ENCODE measurements at regions of chr4 and their contacts with region 1.

Region 1: DNA sequence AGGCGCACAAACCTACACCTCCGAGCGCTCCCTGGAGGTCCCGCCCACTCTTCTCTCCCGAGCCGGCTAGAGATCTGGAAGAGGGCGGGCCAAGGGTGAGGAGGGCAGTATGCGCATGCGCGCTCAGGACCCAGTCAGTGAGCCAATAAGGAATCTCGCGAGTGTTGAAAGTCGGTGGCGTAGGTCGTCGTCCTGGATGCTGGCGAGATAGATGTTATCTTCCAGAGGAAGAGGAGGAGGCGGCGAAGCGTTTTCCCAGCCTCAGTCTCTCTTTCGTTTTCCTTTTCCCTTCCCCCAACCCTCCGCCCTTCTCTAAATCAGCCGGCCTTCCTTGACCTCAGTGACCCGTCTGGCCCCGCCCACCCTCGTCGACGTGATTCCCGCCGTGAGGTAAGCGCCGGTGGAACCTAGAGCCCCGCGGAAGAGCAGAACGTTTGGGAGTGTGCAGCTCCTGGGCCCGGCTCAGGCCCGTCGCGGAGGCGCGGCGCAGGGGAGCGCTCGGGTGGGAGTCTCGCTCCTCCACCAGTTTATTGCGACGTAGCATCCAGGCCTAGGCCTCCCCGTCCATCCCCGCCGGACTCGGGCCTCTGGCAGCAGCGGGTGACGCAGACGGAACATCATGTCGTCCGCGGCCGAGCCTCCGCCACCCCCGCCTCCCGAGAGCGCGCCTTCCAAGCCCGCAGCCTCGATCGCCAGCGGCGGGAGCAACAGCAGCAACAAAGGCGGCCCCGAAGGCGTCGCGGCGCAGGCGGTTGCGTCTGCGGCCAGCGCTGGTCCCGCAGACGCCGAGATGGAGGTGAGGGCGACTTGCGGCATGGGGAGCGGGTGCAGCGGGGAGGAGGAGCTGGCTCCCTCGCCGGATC is at the start of gene SMARCA5:
- DNase-seq: peak; percentile 96
- H3K4me3 Mint-ChIP-seq: peak within 1 kb of the TSS; percentile 94
- H3K27ac Mint-ChIP-seq: peak within 1 kb of the TSS; percentile 89
- H3K4me1 Mint-ChIP-seq: peaks cover 30% of the 10 kb centered on the region
- H3K27me3 Mint-ChIP-seq: peaks cover 11% of the 10 kb centered on the region
- total RNA-seq, gene SMARCA5: 51.7 to 53.3 TPM

Region 2: DNA sequence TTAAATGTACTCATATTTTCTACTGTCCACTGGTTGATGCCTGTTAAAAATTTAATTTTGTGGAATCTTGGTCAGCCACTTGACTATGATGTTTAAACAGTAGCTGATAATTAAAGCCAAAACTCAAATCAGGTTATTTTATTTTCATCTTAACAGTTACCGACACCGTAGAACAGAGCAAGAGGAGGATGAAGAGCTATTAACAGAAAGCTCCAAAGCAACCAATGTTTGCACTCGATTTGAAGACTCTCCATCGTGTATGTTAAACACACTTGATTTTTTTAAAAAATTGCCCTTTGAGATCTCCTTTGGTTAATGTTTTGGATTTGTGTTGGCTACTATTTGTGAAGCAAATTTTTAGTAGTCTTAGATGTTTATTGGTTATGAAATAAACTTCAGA is 10.7 kb after region 1 on chr4:
- CTCF ChIA-PET with region 1: interaction called, 3 read pairs
- POLR2A ChIA-PET with region 1: interaction called, 19 read pairs
- DNase-seq: no peak
- H3K4me3 Mint-ChIP-seq: no peak overlapping the region
- H3K27ac Mint-ChIP-seq: no peak overlapping the region
- H3K4me1 Mint-ChIP-seq: peaks cover 28% of the 10 kb centered on the region
- H3K27me3 Mint-ChIP-seq: no peaks in the 10 kb centered on the region

Measured in activated CD4-positive, alpha-beta memory T cell treated with anti-CD3 and anti-CD28 coated beads, Interleukin-2, amount 10 ng/mL, durations not matched to agents 7 days and 5 days (primary cell).